ENCODE measurements at regions of chr2 and their contacts with region 1.

Region 1: GRCh38 chr2:42974721-42975717 is 182.6 kb upstream of the HAAO start:
- DNase-seq: peak; percentile 73 to 85 (median 79)
- H3K4me3 ChIP-seq: peak overlapping the region in 2 of 4 donors; percentile 34 to 41
- H3K27ac ChIP-seq: peak overlapping the region in 3 of 5 donors; percentile 20 to 71 (median 62)
- H3K4me1 ChIP-seq: peaks cover 3 to 11% of the 10 kb centered on the region in 2 donors
- H3K27me3 ChIP-seq: no peaks in the 10 kb centered on the region
- CTCF ChIP-seq: peak; percentile 82 to 96 (median 94)
- POLR2A ChIP-seq: no peak

Region 2: DNA sequence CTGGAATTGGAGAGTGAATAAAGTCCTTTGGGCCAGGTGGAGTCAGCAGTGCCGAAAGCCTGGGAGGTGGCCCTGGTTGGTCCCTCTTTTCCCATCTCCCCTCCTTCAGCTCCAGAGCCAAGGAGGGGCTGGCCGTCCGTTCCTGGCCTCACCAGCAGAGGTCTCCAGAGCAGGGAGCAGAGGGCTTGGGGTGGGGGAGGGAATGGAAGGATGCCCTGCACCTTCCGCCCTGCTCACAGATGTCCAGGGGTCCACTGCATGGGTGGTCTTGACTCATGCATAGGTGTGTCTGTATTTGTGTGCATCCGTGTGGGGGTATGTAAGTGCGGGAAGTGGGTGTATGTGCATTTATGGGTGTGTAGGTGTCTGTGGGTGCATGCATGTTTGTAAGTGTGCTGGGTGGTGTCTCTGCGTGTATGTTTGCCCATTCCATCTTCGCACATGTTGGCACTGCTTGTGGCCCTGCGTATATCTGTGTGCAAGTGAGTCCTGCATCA is 49.5 kb after region 1 on chr2:
- intact Hi-C with region 1: loop called in 1 of 2 experiments (anchors 10 kb)
- DNase-seq: peak; percentile 52 to 78 (median 71)
- H3K4me3 ChIP-seq: no peak overlapping the region
- H3K27ac ChIP-seq: peak overlapping the region in 1 of 5 donors; percentile 48
- H3K4me1 ChIP-seq: no peaks in the 10 kb centered on the region
- H3K27me3 ChIP-seq: no peaks in the 10 kb centered on the region
- CTCF ChIP-seq: peak; percentile 63 to 90 (median 80)
- POLR2A ChIP-seq: no peak

Region 3: DNA sequence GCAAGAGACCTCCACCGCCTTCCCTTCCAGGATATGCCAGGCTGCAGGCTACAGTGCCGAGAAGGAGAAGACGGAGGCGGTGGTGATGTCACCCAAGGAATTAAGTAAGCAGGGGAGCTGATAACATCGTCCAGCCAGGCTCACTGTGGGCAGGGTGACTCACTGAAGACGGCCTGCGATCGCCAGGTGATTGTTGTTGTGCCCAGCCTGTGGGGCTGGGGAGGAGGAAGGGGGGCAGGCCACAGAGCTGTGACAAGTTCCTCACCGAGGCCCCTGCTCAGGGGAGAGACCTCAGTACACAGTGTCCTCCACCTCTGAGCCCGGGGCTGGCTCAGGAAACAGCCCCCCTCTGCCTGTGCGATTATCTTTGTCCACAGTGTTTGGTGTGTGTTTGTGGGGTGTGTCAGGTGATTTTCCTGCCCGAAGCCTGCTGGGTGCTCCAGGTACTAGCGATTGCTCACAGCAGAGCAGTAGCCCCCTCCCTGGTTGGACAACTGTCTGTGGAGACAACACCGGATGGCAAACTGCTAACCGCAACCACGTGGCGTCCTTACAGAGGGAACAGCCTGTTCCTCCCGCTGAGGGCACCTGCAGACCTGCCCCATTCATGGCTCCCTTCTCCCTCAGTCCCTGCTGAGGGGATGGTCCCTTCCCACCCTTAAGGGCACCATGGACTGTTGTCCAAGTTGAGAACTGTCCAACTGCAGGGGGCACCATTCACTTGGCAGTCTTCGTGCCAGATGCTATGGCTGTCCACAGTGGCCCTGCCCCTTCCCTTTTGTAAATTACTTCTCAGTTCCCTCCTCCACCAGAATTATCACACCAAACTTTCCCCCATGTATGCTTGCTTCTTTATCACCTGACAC is 156.2 kb after region 1 on chr2:
- intact Hi-C with region 1: loop called in 1 of 2 experiments (anchors 10 kb)
- DNase-seq: peak; percentile 77 to 94 (median 93)
- H3K4me3 ChIP-seq: no peak overlapping the region
- H3K27ac ChIP-seq: peak overlapping the region; percentile 26 to 88 (median 71)
- H3K4me1 ChIP-seq: peaks cover 10 to 54% of the 10 kb centered on the region in 2 donors
- H3K27me3 ChIP-seq: no peaks in the 10 kb centered on the region
- CTCF ChIP-seq: peak in 5 of 6 experiments; percentile 42 to 69 (median 46)
- POLR2A ChIP-seq: peak in 1 of 2 donors; percentile 12

Region 4: DNA sequence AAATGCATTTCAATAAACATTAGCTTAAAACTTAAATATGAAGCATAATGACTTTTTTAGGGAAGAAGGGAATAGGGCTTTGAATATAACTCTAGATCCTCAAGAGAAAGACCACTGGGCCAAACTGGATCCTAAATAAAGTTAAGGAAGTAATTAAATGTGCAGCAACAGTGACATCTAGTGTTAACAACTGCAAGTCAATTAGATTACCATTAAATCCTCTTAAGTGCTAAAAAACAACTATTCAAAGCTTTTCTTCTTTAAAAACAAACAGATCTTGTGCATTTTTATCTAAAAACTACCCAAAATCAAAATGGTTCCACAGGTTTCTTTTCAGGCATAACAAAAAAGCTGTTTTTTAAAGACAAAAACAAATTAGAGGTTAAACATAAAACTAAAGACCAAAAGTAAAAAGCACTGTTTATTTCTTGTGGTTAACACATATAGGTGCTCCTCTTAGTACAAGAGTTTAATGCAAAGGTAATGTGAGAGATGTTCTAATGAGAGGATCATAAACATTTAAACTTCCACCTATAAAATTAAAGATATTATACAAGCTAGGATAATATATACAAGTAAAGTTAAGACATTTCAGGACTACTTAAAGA is 509.4 kb after region 1 on chr2:
- intact Hi-C with region 1: loop called (anchors 10 kb)
- DNase-seq: no peak
- H3K4me3 ChIP-seq: no peak overlapping the region
- H3K27ac ChIP-seq: peak overlapping the region in 1 of 5 donors; percentile 19
- H3K4me1 ChIP-seq: peaks cover 0 to 58% of the 10 kb centered on the region in 2 donors
- H3K27me3 ChIP-seq: no peaks in the 10 kb centered on the region
- CTCF ChIP-seq: peak; percentile 37 to 91 (median 74)
- POLR2A ChIP-seq: no peak

Measured in adrenal gland (tissue), 19 donors.